PC-9 (cell line): ENCODE measurements at regions of chr17 and their contacts with region 1.

Region 1: GRCh38 chr17:65100316-65101140 is 36.6 kb upstream of the RGS9 start:
- DNase-seq: peak; percentile 47 to 81
- H3K4me3 ChIP-seq: peak overlapping the region; percentile 54
- H3K27ac ChIP-seq: peak overlapping the region; percentile 84
- H3K4me1 ChIP-seq: peaks cover 39% of the 10 kb centered on the region
- H3K27me3 ChIP-seq: no peaks in the 10 kb centered on the region
- CTCF ChIP-seq: peak; percentile 93

Region 2: GRCh38 chr17:64773836-64774761 is 326.4 kb before region 1 on chr17:
- CTCF ChIA-PET with region 1: no interaction called
- POLR2A ChIA-PET with region 1: no interaction called
- intact Hi-C with region 1: loop called (anchors 10 kb)
- DNase-seq: peak; percentile 90 to 96
- H3K4me3 ChIP-seq: peak overlapping the region; percentile 71
- H3K27ac ChIP-seq: peak overlapping the region; percentile 61
- H3K4me1 ChIP-seq: peaks cover 18% of the 10 kb centered on the region
- H3K27me3 ChIP-seq: no peaks in the 10 kb centered on the region
- CTCF ChIP-seq: peak; percentile 72

Region 3: GRCh38 chr17:64968652-64969501 is 131.7 kb before region 1 on chr17:
- CTCF ChIA-PET with region 1: interaction called, 4 read pairs
- POLR2A ChIA-PET with region 1: interaction called, 4 read pairs
- intact Hi-C with region 1: loop called (anchors 2 kb)
- DNase-seq: no peak
- H3K4me3 ChIP-seq: no peak overlapping the region
- H3K27ac ChIP-seq: no peak overlapping the region
- H3K4me1 ChIP-seq: peaks cover 31% of the 10 kb centered on the region
- H3K27me3 ChIP-seq: no peaks in the 10 kb centered on the region
- CTCF ChIP-seq: no peak

Region 4: GRCh38 chr17:64992325-64992811 is 108.2 kb before region 1 on chr17:
- CTCF ChIA-PET with region 1: no interaction called
- POLR2A ChIA-PET with region 1: no interaction called
- intact Hi-C with region 1: loop called (anchors 1 kb)
- DNase-seq: peak; percentile 95 to 99
- H3K4me3 ChIP-seq: no peak overlapping the region
- H3K27ac ChIP-seq: peak overlapping the region; percentile 86
- H3K4me1 ChIP-seq: peaks cover 60% of the 10 kb centered on the region
- H3K27me3 ChIP-seq: no peaks in the 10 kb centered on the region
- CTCF ChIP-seq: no peak

Region 5: DNA sequence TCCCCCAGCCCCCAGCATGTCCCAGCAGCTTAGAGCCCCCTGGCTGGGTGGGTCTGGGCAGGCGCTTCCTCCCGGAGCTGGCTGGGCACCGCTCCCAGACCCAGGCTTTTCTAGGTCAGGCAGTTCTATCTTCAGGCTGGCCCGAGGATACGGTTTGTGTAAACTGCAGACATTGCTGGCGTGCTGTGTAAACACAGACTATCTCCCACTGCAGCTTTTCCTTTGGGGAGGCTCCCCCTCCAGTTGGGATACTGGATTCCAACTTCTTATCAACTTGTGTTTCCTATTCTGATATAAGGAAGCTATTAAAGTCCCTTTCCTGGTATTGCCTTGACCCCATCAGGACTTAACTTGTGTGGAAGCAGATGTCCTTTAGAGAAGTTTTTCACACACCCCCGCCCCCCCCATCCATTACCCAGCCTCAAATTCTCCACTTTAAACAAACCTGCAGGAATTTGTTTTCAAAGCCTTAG is 25.7 kb before region 1 on chr17:
- CTCF ChIA-PET with region 1: no interaction called
- POLR2A ChIA-PET with region 1: no interaction called
- intact Hi-C with region 1: no loop called
- DNase-seq: no peak
- H3K4me3 ChIP-seq: no peak overlapping the region
- H3K27ac ChIP-seq: no peak overlapping the region
- H3K4me1 ChIP-seq: no peaks in the 10 kb centered on the region; the same call in 1 of the 2 replicates
- H3K27me3 ChIP-seq: no peaks in the 10 kb centered on the region
- CTCF ChIP-seq: no peak

Region 6: GRCh38 chr17:65131946-65132366 is 31.4 kb after region 1 on chr17:
- CTCF ChIA-PET with region 1: no interaction called
- POLR2A ChIA-PET with region 1: interaction called, 13 read pairs
- intact Hi-C with region 1: no loop called
- DNase-seq: no peak
- H3K4me3 ChIP-seq: no peak overlapping the region
- H3K27ac ChIP-seq: no peak overlapping the region
- H3K4me1 ChIP-seq: 0 out of 2 replicates have a peak, but pooled peaks cover 5% of the 10 kb centered on the region
- H3K27me3 ChIP-seq: no peaks in the 10 kb centered on the region
- CTCF ChIP-seq: no peak

Region 7: DNA sequence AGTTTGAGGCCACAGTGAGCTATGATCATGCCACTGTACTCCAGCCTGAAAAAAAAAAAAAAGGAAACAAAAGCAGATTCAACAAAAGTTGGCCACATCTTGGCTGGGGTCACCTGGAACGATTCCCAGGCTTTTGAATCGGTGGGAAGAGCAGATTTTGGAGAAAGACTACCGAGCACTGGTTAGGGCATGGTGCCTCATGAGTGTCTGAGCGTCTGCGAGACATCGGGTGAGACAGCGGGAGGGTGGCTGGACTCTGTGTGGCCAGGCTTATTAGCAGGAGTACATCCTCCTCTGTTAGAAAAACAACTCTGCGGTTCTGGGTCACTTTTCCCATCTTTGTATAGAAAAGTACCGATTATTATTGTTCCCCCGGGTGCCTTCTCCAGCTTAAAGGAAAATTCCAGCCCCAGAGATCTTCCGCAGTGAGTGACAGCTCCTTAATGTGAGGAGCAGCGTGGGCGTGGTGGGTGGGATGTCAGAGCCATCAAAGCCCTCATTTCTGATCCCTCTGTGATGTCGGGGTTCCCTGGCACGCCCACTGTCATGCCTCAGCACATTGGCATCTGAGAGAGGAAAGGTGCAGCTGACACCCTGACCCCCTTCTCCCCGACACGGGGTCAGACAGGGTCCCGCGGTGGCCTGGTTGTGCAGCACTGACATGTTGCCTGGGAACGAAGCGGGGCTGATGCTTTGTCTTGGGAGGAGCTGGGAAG is 43.5 kb after region 1 on chr17:
- CTCF ChIA-PET with region 1: no interaction called
- POLR2A ChIA-PET with region 1: no interaction called
- intact Hi-C with region 1: no loop called
- DNase-seq: peak in 1 of 2 experiments; percentile 11
- H3K4me3 ChIP-seq: no peak overlapping the region
- H3K27ac ChIP-seq: no peak overlapping the region
- H3K4me1 ChIP-seq: no peaks in the 10 kb centered on the region
- H3K27me3 ChIP-seq: peaks cover 3% of the 10 kb centered on the region; the same call in 1 of the 2 replicates
- CTCF ChIP-seq: no peak

Region 8: DNA sequence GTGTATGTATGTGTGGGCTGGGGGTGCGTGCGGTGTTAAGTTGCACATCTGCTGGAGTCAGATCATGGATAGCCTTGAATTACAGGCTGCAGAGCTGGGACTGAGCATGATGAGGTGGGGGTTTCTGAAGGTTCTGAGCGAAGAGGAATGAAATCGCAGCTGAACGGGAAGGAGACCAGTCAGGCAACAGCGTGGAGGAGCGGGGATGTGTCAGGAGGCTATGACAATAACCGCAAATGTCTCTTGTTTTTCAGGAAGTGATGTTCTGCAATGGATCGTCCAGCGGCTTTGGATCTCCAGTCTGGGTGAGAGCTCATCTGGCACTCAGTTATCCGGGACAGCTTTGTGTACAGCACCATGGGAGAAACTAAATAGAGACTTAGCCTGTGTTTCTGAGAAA is 57.5 kb after region 1 on chr17:
- CTCF ChIA-PET with region 1: no interaction called
- POLR2A ChIA-PET with region 1: no interaction called
- intact Hi-C with region 1: no loop called
- DNase-seq: no peak
- H3K4me3 ChIP-seq: no peak overlapping the region
- H3K27ac ChIP-seq: no peak overlapping the region
- H3K4me1 ChIP-seq: no peaks in the 10 kb centered on the region
- H3K27me3 ChIP-seq: no peaks in the 10 kb centered on the region; the same call in 1 of the 2 replicates
- CTCF ChIP-seq: no peak